Calu3 (cell line): ENCODE measurements at regions of chr12 and their contacts with region 1.

Region 1: GRCh38 chr12:63843721-63844390 is 644 bp upstream of the SRGAP1 start:
- DNase-seq: peak; percentile 96
- H3K4me3 Mint-ChIP-seq: peak overlapping the region; percentile 97
- H3K27ac Mint-ChIP-seq: peak overlapping the region; percentile 93
- H3K4me1 Mint-ChIP-seq: peaks cover 19% of the 10 kb centered on the region
- H3K27me3 Mint-ChIP-seq: no peaks in the 10 kb centered on the region
- CTCF ChIP-seq: peak; percentile 96

Region 2: GRCh38 chr12:63706336-63706735 is 137.5 kb before region 1 on chr12:
- CTCF ChIA-PET with region 1: no interaction called
- intact Hi-C with region 1: no loop called
- DNase-seq: no peak
- H3K4me3 Mint-ChIP-seq: no peak overlapping the region
- H3K27ac Mint-ChIP-seq: no peak overlapping the region
- H3K4me1 Mint-ChIP-seq: no peaks in the 10 kb centered on the region
- H3K27me3 Mint-ChIP-seq: no peaks in the 10 kb centered on the region
- CTCF ChIP-seq: no peak

Region 3: DNA sequence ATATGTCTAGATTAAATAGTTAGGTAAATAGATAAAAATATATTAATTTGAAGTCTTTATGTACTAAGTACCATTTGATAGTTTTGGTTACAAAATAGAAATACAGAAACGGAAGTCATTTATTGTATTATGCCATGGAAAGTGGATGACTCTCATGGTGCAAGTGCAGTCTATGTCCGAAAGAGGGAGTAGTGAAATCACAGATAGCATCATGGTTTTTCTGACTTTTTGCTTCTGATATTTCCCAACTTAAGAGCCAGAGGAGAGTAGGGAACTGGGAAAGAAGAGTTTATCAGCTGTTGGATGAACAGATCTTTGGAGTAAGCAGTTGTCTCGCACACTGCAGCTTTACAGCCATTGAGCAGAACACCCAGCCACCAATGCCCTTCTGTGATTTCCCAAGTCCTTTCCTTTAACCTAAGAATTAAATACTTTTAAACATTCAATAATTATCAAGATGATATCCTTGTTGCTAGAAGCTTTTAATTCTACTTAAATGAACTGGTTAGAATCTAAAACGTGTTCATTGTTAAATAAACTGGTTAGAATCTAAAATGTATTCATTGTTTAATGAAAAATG is 17.8 kb before region 1 on chr12:
- CTCF ChIA-PET with region 1: interaction called, 3 read pairs
- intact Hi-C with region 1: loop called (anchors 1 kb)
- DNase-seq: no peak
- H3K4me3 Mint-ChIP-seq: no peak overlapping the region
- H3K27ac Mint-ChIP-seq: no peak overlapping the region
- H3K4me1 Mint-ChIP-seq: peaks cover 18% of the 10 kb centered on the region
- H3K27me3 Mint-ChIP-seq: no peaks in the 10 kb centered on the region
- CTCF ChIP-seq: peak; percentile 63

Region 4: GRCh38 chr12:63882844-63883243 is 39.0 kb after region 1 on chr12:
- CTCF ChIA-PET with region 1: no interaction called
- intact Hi-C with region 1: no loop called
- DNase-seq: no peak
- H3K4me3 Mint-ChIP-seq: no peak overlapping the region
- H3K27ac Mint-ChIP-seq: no peak overlapping the region
- H3K4me1 Mint-ChIP-seq: peaks cover 9% of the 10 kb centered on the region
- H3K27me3 Mint-ChIP-seq: no peaks in the 10 kb centered on the region
- CTCF ChIP-seq: no peak

Region 5: GRCh38 chr12:63978519-63978918 is 134.7 kb after region 1 on chr12:
- CTCF ChIA-PET with region 1: no interaction called
- intact Hi-C with region 1: loop called (anchors 2 kb)
- DNase-seq: no peak
- H3K4me3 Mint-ChIP-seq: no peak overlapping the region
- H3K27ac Mint-ChIP-seq: peak overlapping the region; percentile 23
- H3K4me1 Mint-ChIP-seq: peaks cover 25% of the 10 kb centered on the region
- H3K27me3 Mint-ChIP-seq: no peaks in the 10 kb centered on the region
- CTCF ChIP-seq: no peak

Region 6: DNA sequence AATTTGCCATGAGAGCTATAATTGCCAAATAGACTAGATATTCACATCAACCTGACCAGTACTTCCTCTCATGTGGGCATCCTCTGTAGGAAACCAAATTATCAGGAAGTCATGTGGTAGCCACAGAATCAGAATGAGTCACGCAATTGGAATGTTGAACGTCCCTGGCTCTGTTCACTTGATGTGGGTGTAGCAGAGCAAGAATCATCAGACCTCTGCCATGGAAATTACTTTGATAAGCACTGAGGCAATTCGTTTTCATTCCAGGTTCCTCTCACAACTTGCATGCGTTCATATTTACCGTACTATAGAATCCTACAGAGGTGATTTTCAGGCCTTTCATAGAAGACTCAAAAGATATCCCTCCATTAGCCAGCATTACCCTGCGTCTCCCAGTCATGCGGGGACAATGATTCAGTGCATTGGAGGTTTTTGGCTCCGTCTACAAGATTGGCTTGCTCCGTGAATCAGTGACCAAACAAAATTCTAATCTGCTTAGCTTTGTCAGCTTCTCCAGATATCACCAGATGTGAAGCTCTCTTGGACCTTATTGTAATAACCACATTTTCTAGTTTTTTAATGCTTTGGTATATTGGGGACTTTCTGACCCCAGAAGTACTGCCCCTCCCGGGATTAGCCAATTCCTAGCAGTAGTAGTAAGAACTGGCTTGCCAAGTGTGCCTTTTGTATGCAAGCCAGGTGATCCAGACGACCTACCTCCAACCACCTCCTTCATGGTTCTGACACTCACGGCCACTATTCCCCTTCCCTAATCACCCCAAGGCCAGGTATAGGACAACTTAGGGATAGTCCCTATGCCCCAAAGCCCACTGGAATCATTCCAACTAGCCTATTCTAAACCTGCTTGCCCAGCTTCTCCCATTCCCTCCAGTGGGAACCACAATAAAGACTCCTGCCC is 244.8 kb after region 1 on chr12:
- CTCF ChIA-PET with region 1: interaction called, 4 read pairs
- intact Hi-C with region 1: loop called (anchors 5 kb)
- DNase-seq: peak; percentile 78
- H3K4me3 Mint-ChIP-seq: peak overlapping the region; percentile 57
- H3K27ac Mint-ChIP-seq: peak overlapping the region; percentile 95
- H3K4me1 Mint-ChIP-seq: peaks cover 46% of the 10 kb centered on the region
- H3K27me3 Mint-ChIP-seq: no peaks in the 10 kb centered on the region
- CTCF ChIP-seq: no peak

Region 7: DNA sequence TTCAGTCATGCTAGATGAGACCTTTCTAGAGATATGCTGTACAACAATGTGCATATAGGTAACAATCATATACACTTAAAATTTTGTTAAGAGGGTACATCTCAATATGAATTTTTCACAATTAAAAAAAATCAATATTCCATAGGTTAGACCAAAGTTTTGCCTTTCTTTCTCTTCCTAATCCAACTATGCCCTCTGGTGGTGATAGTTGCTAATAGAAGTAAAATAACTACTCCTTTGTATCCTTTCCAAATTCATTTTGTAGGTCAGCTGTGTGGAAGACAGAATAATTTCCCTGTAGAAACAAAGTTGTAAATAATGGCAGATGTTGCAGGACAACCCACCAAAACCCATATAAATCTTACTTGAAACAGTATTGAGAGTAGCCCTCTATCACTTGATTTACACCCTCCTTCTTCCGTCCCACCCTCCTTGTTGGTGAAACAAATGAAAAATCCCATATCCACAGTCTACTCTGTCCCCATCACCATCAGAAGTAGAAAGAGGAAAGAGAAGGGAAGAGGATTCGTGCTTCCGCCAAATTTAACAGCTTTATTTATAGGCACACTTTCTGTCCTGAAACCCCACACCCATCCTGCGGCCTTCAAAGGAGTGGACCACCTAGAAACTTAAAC is 412.4 kb after region 1 on chr12:
- CTCF ChIA-PET with region 1: interaction called, 16 read pairs
- intact Hi-C with region 1: loop called (anchors 1 kb)
- DNase-seq: peak; percentile 24
- H3K4me3 Mint-ChIP-seq: no peak overlapping the region
- H3K27ac Mint-ChIP-seq: no peak overlapping the region
- H3K4me1 Mint-ChIP-seq: no peaks in the 10 kb centered on the region
- H3K27me3 Mint-ChIP-seq: no peaks in the 10 kb centered on the region
- CTCF ChIP-seq: peak; percentile 65